Activated T-helper 1 cell treated with anti-CD3 and anti-CD28 coated beads, Interleukin-12 subunit alpha, Interleukin-12 subunit beta, Interleukin-2, Interleukin-4 antibody, amounts not matched to agents 30 ng/mL and 10 ng/mL and 1 ng/mL, durations not matched to agents 14 hours and 24 hours and 36 hours (primary cell): ENCODE measurements at regions of chr7 and their contacts with region 1.

Region 1: GRCh38 chr7:111735661-111736551 is 173.6 kb upstream of the IMMP2L start:
- DNase-seq: peak; percentile 29
- H3K4me3 Mint-ChIP-seq: no peak overlapping the region
- H3K27ac Mint-ChIP-seq: no peak overlapping the region
- H3K4me1 Mint-ChIP-seq: no peaks in the 10 kb centered on the region
- H3K27me3 Mint-ChIP-seq: no peaks in the 10 kb centered on the region

Region 2: DNA sequence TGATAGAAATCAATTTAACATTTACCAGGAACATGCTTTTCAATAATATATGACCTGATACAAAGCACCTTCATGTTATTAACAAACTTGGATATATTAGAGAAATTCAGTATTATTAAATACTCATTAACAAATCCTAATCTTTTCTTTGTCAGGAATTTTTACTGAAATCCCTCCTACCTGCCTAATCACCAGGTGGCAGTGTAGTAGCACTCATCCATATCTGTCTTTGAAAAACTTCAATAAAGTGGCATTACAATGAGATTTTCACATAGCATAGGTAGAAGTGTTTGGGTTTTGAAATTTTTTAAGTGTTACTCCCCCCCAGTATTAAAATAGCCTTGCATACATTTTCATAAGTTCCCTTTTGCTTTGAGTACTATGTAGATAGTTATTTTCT is 1891.5 kb before region 1 on chr7:
- intact Hi-C with region 1: loop called (anchors 1 kb)
- DNase-seq: no peak
- H3K4me3 Mint-ChIP-seq: no peak overlapping the region
- H3K27ac Mint-ChIP-seq: no peak overlapping the region
- H3K4me1 Mint-ChIP-seq: no peaks in the 10 kb centered on the region
- H3K27me3 Mint-ChIP-seq: no peaks in the 10 kb centered on the region

Region 3: GRCh38 chr7:111329367-111330234 is 406.3 kb before region 1 on chr7:
- intact Hi-C with region 1: loop called (anchors 2 kb)
- DNase-seq: no peak
- H3K4me3 Mint-ChIP-seq: no peak overlapping the region
- H3K27ac Mint-ChIP-seq: no peak overlapping the region
- H3K4me1 Mint-ChIP-seq: no peaks in the 10 kb centered on the region
- H3K27me3 Mint-ChIP-seq: no peaks in the 10 kb centered on the region

Region 4: GRCh38 chr7:111486472-111487142 is 249.3 kb before region 1 on chr7:
- intact Hi-C with region 1: loop called (anchors 1 kb)
- DNase-seq: no peak
- H3K4me3 Mint-ChIP-seq: no peak overlapping the region
- H3K27ac Mint-ChIP-seq: no peak overlapping the region
- H3K4me1 Mint-ChIP-seq: no peaks in the 10 kb centered on the region
- H3K27me3 Mint-ChIP-seq: no peaks in the 10 kb centered on the region